Heart left ventricle (tissue), 16 donors: ENCODE measurements at regions of chr5 and their contacts with region 1.

Region 1: DNA sequence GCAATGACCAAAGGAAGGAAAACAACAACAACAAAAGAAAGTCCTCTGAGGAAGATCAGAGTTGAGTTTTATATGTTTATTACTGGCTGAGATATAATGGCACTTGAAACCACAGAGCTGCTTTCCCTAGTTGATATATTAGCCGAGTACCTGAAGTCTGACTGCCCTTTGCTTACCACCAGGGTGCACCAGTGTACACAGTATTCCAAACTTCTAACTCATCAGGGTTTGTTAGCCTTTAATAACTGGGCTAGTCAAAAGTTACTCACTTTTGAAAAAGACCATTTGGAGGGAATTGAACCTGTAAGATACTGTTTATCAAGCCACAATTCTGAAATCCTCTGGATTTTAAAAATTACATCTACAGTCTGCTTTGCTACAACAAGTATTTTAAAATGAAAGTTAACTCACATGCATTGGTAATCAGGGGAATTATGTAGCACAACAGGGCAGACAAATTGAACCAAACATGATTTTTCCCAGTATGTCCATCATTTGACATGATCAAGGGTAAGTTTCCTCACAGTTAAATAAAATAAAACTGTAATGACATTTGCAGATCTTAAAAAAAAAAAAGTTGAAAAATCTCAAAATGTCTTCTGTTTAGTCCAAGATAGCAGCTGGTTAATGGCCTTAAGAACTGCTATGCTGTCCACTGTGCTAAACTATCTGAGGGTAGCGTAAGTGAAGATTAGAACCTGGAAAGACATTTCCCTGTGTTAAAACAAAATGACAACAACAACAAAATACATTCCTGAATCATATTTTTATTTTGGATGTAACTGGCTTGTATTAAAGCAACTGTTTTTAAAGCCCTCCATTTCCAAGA is 57.3 kb upstream of the C6 start:
- DNase-seq: peak in 3 of 5 donors; percentile 43 to 57 (median 50)
- ATAC-seq: peak; percentile 88 to 97 (median 94)
- H3K4me3 ChIP-seq: peak overlapping the region in 2 of 12 donors; percentile 4 to 16
- H3K27ac ChIP-seq: peak overlapping the region in 10 of 12 donors; percentile 1 to 47 (median 26)
- H3K4me1 ChIP-seq: peaks cover 0 to 15% (median 5%) of the 10 kb centered on the region in 12 donors
- H3K27me3 ChIP-seq: no peaks in the 10 kb centered on the region
- CTCF ChIP-seq: peak; percentile 44 to 85 (median 74)
- POLR2A ChIP-seq: no peak

Region 2: DNA sequence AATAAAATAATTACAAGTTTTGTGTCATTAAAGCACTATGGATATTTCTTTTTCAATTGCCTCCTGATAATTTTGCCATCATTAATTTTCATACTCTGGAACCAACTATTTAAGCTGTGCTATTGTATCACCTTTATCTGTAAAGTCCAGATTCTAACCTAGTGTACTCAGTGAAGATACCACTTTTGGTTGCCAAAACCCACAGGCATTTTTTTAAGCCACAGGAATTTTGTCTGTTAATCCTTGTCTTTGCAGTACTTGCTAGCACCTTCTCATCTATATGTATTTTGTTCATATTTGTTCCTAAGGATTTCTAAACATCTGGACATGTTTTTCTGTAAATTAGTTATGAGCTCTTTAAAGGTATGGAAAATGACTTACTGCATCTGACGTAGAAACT is 1364.5 kb before region 1 on chr5:
- intact Hi-C with region 1: no loop called
- DNase-seq: no peak
- ATAC-seq: no peak
- H3K4me3 ChIP-seq: no peak overlapping the region
- H3K27ac ChIP-seq: no peak overlapping the region
- H3K4me1 ChIP-seq: no peaks in the 10 kb centered on the region
- H3K27me3 ChIP-seq: no peaks in the 10 kb centered on the region
- CTCF ChIP-seq: no peak
- POLR2A ChIP-seq: no peak

Region 3: GRCh38 chr5:41503310-41503709 is 232.7 kb after region 1 on chr5:
- intact Hi-C with region 1: no loop called
- DNase-seq: no peak
- ATAC-seq: no peak
- H3K4me3 ChIP-seq: no peak overlapping the region
- H3K27ac ChIP-seq: no peak overlapping the region
- H3K4me1 ChIP-seq: peaks cover 0 to 27% (median 6%) of the 10 kb centered on the region in 12 donors
- H3K27me3 ChIP-seq: no peaks in the 10 kb centered on the region
- CTCF ChIP-seq: no peak
- POLR2A ChIP-seq: no peak

Region 4: GRCh38 chr5:41524174-41524573 is 253.5 kb after region 1 on chr5:
- intact Hi-C with region 1: loop called in 9 of 10 experiments (anchors 2 to 5 kb)
- DNase-seq: no peak
- ATAC-seq: no peak
- H3K4me3 ChIP-seq: no peak overlapping the region
- H3K27ac ChIP-seq: no peak overlapping the region
- H3K4me1 ChIP-seq: peaks cover 0 to 18% (median 1%) of the 10 kb centered on the region in 12 donors
- H3K27me3 ChIP-seq: no peaks in the 10 kb centered on the region
- CTCF ChIP-seq: peak in 5 of 12 donors; percentile 9 to 38 (median 22)
- POLR2A ChIP-seq: no peak

Region 5: GRCh38 chr5:41636605-41637004 is 366.0 kb after region 1 on chr5:
- intact Hi-C with region 1: loop called in 4 of 10 experiments (anchors 5 to 10 kb)
- DNase-seq: no peak
- ATAC-seq: peak in 1 of 4 donors; percentile 45
- H3K4me3 ChIP-seq: no peak overlapping the region
- H3K27ac ChIP-seq: no peak overlapping the region
- H3K4me1 ChIP-seq: no peaks in the 10 kb centered on the region
- H3K27me3 ChIP-seq: no peaks in the 10 kb centered on the region
- CTCF ChIP-seq: peak in 6 of 12 donors; percentile 8 to 37 (median 20)
- POLR2A ChIP-seq: no peak

Region 6: GRCh38 chr5:41641621-41642020 is 371.0 kb after region 1 on chr5:
- intact Hi-C with region 1: loop called in 4 of 10 experiments (anchors 5 to 10 kb)
- DNase-seq: no peak
- ATAC-seq: no peak
- H3K4me3 ChIP-seq: no peak overlapping the region
- H3K27ac ChIP-seq: no peak overlapping the region
- H3K4me1 ChIP-seq: no peaks in the 10 kb centered on the region
- H3K27me3 ChIP-seq: no peaks in the 10 kb centered on the region
- CTCF ChIP-seq: peak in 8 of 12 donors; percentile 9 to 43 (median 26)
- POLR2A ChIP-seq: no peak

Region 7: DNA sequence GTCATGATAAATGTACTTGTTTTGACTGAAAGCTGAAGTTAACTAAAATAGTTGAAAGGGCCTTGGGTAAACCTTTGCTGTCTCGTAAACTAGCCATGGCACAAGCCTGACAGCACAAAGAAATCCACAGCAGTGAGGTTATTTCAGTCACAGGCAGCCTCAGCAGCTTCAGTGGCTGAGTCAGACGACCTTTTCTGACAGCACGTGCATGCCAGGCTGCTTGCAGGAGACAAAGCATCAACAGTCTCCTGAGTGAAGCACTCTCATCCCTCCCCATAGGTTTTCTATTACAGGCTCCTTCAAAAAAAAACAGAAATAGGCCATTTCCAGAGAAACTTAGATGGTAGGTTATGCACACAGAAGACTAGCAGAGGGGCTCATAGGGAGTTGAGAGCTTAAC is 565.0 kb after region 1 on chr5:
- intact Hi-C with region 1: loop called in 5 of 10 experiments (anchors 5 to 10 kb)
- DNase-seq: peak; percentile 55 to 84 (median 64)
- ATAC-seq: peak; percentile 94 to 97 (median 96)
- H3K4me3 ChIP-seq: no peak overlapping the region
- H3K27ac ChIP-seq: peak overlapping the region in 11 of 12 donors; percentile 1 to 85 (median 65)
- H3K4me1 ChIP-seq: peaks cover 0 to 28% (median 15%) of the 10 kb centered on the region in 12 donors
- H3K27me3 ChIP-seq: no peaks in the 10 kb centered on the region
- CTCF ChIP-seq: no peak
- POLR2A ChIP-seq: no peak

Region 8: GRCh38 chr5:41843456-41844370 is 573.1 kb after region 1 on chr5:
- intact Hi-C with region 1: loop called in 5 of 10 experiments (anchors 5 to 10 kb)
- DNase-seq: peak in 1 of 5 donors; percentile 28
- ATAC-seq: peak in 3 of 4 donors; percentile 67 to 81 (median 72)
- H3K4me3 ChIP-seq: no peak overlapping the region
- H3K27ac ChIP-seq: no peak overlapping the region
- H3K4me1 ChIP-seq: peaks cover 0 to 20% (median 0%) of the 10 kb centered on the region in 12 donors
- H3K27me3 ChIP-seq: no peaks in the 10 kb centered on the region
- CTCF ChIP-seq: peak; percentile 70 to 86 (median 82)
- POLR2A ChIP-seq: no peak